Tibial artery (tissue), 4 donors: ENCODE measurements at regions of chr2 and their contacts with region 1.

Region 1: DNA sequence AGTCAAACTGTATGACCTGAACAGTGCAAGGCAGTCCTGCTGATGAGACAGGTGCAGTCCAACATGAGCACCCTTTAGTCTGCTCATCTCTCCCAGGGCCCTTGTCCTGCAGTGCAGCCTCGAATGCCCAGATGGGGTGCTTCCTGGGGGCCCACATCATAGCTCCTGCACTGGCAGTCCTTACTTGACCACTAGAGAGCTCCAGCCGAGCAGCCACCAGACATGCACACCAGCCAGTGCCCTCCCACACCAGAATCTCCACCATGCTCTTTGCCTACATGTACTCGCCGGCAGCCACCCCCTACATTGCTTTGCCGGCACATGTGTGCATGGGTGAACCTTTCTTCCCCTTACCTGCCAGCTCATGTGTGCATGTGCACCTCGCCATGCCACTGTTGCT is 188.8 kb upstream of the GULP1 start:
- DNase-seq: no peak
- H3K4me3 ChIP-seq: no peak overlapping the region
- H3K27ac ChIP-seq: no peak overlapping the region
- H3K4me1 ChIP-seq: no peaks in the 10 kb centered on the region
- H3K27me3 ChIP-seq: no peaks in the 10 kb centered on the region
- CTCF ChIP-seq: no peak

Region 2: GRCh38 chr2:188314314-188315054 is 211.6 kb after region 1 on chr2:
- intact Hi-C with region 1: loop called (anchors 5 kb)
- DNase-seq: no peak
- H3K4me3 ChIP-seq: no peak overlapping the region
- H3K27ac ChIP-seq: no peak overlapping the region
- H3K4me1 ChIP-seq: peaks cover 0 to 20% (median 0%) of the 10 kb centered on the region in 4 donors
- H3K27me3 ChIP-seq: no peaks in the 10 kb centered on the region
- CTCF ChIP-seq: no peak